ENCODE measurements at regions of chr3 and their contacts with region 1.

Region 1: DNA sequence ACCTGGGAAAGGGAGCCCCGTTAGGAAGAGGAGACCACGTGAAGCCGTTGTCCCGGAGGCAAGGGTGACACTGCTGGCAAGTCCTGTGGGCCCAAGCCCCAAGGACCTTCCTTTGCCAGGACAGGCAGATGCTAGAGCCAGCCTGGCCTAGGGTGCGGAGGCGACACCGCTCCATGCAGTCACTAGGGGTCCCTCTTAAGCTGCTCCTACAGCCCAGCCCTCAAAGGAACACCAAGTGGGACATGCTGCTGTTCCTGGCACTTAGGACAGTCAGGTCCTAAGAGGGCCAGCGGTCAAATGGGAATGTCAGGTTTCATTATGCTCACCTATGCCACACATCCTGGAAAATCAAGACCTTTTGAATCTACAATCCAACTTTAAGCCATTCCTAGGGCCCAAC is 59.7 kb downstream of the RPN1 start:
- DNase-seq: no peak
- H3K4me3 ChIP-seq: no peak overlapping the region
- H3K27ac ChIP-seq: no peak overlapping the region
- H3K4me1 ChIP-seq: no peaks in the 10 kb centered on the region
- H3K27me3 ChIP-seq: no peaks in the 10 kb centered on the region
- CTCF ChIP-seq: no peak
- POLR2A ChIP-seq: no peak

Region 2: DNA sequence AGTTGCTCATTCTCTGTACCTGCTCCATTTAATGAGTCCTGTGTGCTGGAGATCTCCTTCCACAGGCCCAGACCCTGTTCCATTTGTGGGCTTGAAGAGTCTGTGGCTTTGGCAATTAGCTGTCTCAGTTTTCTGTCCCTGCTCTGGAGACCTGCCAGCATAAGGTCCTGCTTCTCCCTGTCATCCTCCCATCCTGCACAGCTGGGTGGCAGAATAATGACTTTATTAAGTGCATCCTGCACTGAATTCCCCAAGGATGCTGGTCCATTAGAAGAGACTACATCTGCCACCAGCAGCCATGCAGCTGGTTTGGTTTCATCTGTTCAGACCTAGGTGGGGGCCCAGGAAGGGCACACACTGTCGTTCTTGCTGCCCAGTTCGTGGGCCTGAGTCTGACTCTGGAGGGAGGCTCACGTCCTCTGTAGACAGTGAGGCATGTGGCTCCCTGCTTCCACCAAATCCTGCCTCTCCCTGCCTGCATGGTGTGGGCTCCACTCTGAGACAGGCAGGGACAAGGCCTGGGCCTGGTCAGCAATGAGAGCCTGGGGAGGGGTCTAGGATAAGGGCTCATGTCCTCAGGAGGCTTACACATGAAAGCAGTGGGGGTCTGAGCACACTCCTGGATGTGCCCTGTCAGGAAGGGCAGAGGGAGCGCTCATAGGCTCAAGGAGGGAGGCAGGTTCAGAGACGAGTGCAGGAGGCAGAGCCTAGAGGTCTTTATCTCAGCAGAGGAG is 1476.4 kb before region 1 on chr3:
- intact Hi-C with region 1: loop called (anchors 5 kb)
- DNase-seq: no peak
- H3K4me3 ChIP-seq: no peak overlapping the region
- H3K27ac ChIP-seq: no peak overlapping the region
- H3K4me1 ChIP-seq: no peaks in the 10 kb centered on the region
- H3K27me3 ChIP-seq: no peaks in the 10 kb centered on the region
- CTCF ChIP-seq: no peak
- POLR2A ChIP-seq: no peak

Region 3: DNA sequence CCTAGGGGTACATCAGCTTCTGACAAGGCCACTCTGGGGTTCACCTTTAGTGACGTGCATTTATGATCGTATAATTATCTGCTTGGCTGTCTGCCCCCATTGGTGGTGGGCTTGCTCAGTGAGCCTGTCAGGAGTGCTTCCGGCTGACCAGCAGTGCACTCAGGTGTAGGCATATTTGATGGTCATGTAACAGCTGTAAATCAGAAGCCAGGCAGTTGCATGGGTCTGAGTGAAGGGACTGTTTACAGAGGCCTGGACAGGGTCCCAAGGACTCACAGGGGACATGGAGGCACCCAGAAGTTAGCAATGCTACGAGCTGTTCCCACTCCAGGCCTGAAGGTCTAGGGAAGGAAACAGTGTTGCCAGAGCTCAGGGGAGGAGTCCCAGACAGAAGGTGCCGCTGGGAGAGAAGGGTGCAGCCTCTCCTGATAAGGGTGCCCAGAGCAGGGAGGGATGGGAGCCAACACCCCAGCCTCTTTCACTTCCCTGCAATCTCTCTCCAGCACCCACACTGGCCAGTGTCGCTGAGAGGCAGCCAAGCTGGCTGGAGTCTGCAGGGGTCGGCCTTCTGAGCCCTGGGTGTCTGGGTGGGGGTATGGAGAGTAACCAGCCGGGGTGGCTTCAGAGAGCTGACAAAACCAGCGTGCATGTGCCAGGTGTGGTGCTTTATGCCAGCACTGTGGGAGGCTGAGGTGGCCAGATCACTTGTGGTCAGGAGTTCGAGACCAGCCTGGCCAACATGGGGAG is 1459.4 kb before region 1 on chr3:
- intact Hi-C with region 1: no loop called
- DNase-seq: no peak
- H3K4me3 ChIP-seq: no peak overlapping the region
- H3K27ac ChIP-seq: no peak overlapping the region
- H3K4me1 ChIP-seq: peaks cover 0 to 8% of the 10 kb centered on the region in 2 donors
- H3K27me3 ChIP-seq: peaks cover 0 to 41% of the 10 kb centered on the region in 2 donors
- CTCF ChIP-seq: no peak
- POLR2A ChIP-seq: no peak

Region 4: DNA sequence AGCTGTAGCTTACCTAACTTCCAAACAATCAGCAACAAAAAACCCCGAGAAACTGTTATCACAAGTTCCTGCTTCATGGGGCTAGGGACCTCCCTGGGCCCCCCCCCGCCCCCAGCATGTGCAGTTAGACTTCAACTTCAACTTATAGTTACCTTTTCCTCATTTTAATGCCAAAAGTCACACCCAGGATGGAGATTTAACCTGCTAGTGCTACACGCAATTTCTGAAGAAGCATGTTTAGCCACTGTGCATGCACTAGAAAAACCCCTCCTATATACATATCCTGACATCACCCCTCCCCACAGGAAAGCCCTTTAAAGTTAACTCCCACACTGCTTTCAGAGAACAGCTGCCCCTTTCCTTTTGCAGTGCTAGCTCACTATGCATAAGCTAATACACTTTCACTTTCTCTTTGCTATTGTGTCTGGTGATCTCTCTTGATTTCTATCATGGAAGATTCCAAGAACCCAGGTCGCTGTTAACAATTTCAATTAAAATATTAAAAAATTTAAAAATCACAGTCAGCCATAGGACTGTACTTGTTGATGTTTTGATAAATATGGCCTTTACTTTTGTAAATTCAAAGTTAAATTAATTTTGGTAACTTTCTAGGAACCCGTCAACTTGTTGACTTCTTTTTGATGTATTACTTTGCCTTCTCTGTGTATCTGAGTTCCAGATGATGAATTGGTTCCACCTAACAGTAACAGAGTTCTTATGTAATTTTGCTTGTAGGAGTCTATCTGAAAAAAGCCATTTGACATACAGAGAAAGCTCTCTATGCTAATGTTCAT is 213.3 kb after region 1 on chr3:
- intact Hi-C with region 1: no loop called
- DNase-seq: no peak
- H3K4me3 ChIP-seq: peak overlapping the region in 2 of 3 donors; percentile 18 to 21
- H3K27ac ChIP-seq: peak overlapping the region in 1 of 2 donors; percentile 42
- H3K4me1 ChIP-seq: peaks cover 0 to 6% of the 10 kb centered on the region in 2 donors
- H3K27me3 ChIP-seq: no peaks in the 10 kb centered on the region
- CTCF ChIP-seq: no peak
- POLR2A ChIP-seq: no peak

Measured in breast epithelium (tissue), 4 donors.